ENCODE measurements at regions of chr10 and their contacts with region 1.

Region 1: DNA sequence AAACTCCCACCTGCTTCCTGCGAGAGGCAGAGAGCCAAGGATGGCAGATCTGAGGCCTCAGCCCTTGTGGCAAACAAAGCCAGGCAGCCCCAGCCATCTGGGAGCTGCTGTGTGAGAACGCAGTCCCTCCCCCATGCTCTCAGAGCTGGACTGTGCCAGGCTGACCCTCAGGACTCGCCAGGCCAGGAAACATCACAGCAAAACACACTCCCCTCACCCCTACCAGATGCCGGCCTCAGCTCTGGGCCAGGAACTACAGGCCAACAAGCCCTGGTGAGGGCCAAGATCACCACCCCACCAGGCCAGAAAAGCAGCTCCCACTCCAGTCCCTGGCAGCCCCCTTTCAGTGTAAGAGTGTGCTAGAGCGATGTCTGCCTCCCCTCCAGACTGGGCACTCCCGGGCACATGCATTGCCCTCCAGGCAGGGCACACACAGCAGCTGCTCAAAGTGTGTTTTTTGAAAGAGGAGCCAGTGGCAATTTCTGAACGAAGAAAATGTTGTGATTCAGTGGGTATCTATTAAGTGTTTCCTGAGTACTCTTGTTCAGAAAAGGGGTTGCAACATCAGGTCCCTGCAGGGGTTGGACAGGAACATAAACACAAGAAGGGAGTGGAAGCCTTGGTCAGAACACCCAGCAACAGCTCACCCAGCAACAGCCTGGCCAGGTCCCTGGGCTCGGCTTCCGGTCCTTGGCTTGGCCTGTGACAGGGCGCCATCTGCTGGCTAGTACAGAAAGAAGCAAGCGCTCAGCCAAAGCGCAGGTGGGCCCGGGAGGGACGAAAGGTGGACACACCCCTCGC is 18.3 kb downstream of the LRRC20 start:
- DNase-seq: peak; percentile 44 to 91 (median 78)
- ATAC-seq: peak; percentile 96 to 100 (median 98)
- H3K4me3 ChIP-seq: no peak overlapping the region
- H3K4me3 Mint-ChIP-seq: peak overlapping the region in 1 of 3 donors; percentile 3
- H3K27ac ChIP-seq: no peak overlapping the region
- H3K27ac Mint-ChIP-seq: peak overlapping the region in 1 of 2 donors; percentile 39
- H3K4me1 ChIP-seq: peaks cover 0 to 14% of the 10 kb centered on the region in 2 experiments
- H3K4me1 Mint-ChIP-seq: peaks cover 9 to 17% (median 12%) of the 10 kb centered on the region in 3 donors
- H3K27me3 ChIP-seq: no peaks in the 10 kb centered on the region
- H3K27me3 Mint-ChIP-seq: no peaks in the 10 kb centered on the region

Region 2: GRCh38 chr10:70227548-70228320 is 136.4 kb before region 1 on chr10:
- CTCF ChIA-PET with region 1: interaction called, 39 to 177 read pairs
- POLR2A ChIA-PET with region 1: interaction called, 4 to 5 read pairs
- DNase-seq: no peak
- ATAC-seq: no peak
- H3K4me3 ChIP-seq: no peak overlapping the region
- H3K4me3 Mint-ChIP-seq: no peak overlapping the region
- H3K27ac ChIP-seq: no peak overlapping the region
- H3K27ac Mint-ChIP-seq: no peak overlapping the region
- H3K4me1 ChIP-seq: peaks cover 3 to 17% of the 10 kb centered on the region in 2 experiments
- H3K4me1 Mint-ChIP-seq: peaks cover 23 to 41% (median 36%) of the 10 kb centered on the region in 3 donors
- H3K27me3 ChIP-seq: no peaks in the 10 kb centered on the region
- H3K27me3 Mint-ChIP-seq: no peaks in the 10 kb centered on the region

Region 3: DNA sequence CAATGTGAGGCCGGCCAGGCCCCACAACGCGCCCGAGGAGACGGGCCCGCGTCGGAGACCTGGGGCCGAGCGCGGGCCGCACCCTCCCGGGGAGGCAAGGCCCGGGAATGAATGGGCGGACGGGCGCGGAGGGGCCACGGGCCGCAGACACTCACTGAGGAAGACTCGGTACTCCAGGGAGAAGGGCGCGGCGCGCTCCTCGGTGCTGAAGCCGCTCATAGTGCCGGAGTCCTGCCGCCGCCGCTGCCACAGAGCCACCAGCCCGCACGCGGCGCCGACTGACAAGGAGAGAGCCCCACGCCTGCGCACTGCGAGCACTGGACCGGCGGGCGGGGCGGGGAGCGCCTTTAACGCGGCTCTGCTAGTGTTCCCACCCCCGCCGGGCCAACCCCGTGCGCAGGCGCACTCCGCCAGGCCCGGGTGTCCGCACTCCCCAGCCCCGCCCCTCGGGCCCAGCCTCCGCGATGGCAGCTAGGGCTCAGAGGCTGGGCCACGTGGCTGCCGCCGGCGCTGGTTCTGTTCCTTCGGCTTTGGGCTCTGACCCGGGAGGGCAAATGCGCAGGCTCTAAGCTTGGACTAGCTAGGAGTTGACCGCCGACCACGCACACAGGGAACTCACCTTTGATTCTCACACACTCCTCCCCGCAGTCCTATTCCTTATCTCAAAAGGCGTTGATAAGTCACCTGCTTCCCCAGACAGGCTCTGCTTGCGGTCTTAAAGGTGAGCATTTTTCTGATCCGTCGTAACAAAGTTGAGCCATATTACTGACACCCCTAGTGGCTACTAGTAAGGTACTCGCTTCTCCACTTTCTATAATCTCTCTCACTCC is 130.8 kb before region 1 on chr10 and contains the start of gene PPA1:
- CTCF ChIA-PET with region 1: interaction called, 3 to 14 read pairs
- POLR2A ChIA-PET with region 1: interaction called, 4 read pairs
- DNase-seq: peak; percentile 97 to 100 (median 99)
- ATAC-seq: peak; percentile 91 to 98 (median 92)
- H3K4me3 ChIP-seq: peak within 1 kb of the TSS; percentile 88
- H3K4me3 Mint-ChIP-seq: peak within 1 kb of the TSS; percentile 78 to 92 (median 83)
- H3K27ac ChIP-seq: peak within 1 kb of the TSS; percentile 80
- H3K27ac Mint-ChIP-seq: peak within 1 kb of the TSS; percentile 77 to 92
- H3K4me1 ChIP-seq: peaks cover 6 to 18% of the 10 kb centered on the region in 2 experiments
- H3K4me1 Mint-ChIP-seq: peaks cover 19 to 37% (median 30%) of the 10 kb centered on the region in 3 donors
- H3K27me3 ChIP-seq: no peaks in the 10 kb centered on the region
- H3K27me3 Mint-ChIP-seq: no peaks in the 10 kb centered on the region
- total RNA-seq, gene PPA1: 56.7 to 78.4 (median 64.4) TPM

Region 4: DNA sequence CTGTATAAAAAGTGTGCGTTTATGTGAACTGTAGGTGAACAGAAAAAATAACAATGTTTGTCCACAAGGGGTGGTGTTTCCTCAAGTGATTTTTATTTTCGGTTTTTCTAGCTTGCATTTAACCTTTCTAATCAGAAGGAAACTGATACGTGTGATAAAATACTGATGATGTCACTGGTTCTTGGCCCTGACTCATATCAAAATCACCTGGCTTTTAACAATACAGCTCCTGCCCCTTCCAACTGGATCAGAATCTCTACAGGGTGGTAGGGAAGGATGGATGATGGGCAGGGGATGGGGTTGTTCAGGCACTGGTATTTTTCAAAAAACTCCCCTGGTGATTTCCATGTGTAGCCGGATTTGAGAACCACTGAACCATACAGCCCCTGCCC is 91.2 kb before region 1 on chr10:
- CTCF ChIA-PET with region 1: interaction called in 1 of 2 experiments, 10 read pairs
- POLR2A ChIA-PET with region 1: no interaction called
- DNase-seq: peak in 2 of 35 experiments; percentile 7 to 60
- ATAC-seq: peak; percentile 33 to 68 (median 58)
- H3K4me3 ChIP-seq: no peak overlapping the region
- H3K4me3 Mint-ChIP-seq: no peak overlapping the region
- H3K27ac ChIP-seq: peak overlapping the region; percentile 12
- H3K27ac Mint-ChIP-seq: no peak overlapping the region
- H3K4me1 ChIP-seq: peaks cover 0 to 4% of the 10 kb centered on the region in 2 experiments
- H3K4me1 Mint-ChIP-seq: peaks cover 6 to 11% (median 10%) of the 10 kb centered on the region in 3 donors
- H3K27me3 ChIP-seq: peaks cover 0 to 3% of the 10 kb centered on the region in 2 experiments
- H3K27me3 Mint-ChIP-seq: no peaks in the 10 kb centered on the region

Measured in T-cell (primary cell).